ENCODE measurements at regions of chr3 and their contacts with region 1.

Region 1: DNA sequence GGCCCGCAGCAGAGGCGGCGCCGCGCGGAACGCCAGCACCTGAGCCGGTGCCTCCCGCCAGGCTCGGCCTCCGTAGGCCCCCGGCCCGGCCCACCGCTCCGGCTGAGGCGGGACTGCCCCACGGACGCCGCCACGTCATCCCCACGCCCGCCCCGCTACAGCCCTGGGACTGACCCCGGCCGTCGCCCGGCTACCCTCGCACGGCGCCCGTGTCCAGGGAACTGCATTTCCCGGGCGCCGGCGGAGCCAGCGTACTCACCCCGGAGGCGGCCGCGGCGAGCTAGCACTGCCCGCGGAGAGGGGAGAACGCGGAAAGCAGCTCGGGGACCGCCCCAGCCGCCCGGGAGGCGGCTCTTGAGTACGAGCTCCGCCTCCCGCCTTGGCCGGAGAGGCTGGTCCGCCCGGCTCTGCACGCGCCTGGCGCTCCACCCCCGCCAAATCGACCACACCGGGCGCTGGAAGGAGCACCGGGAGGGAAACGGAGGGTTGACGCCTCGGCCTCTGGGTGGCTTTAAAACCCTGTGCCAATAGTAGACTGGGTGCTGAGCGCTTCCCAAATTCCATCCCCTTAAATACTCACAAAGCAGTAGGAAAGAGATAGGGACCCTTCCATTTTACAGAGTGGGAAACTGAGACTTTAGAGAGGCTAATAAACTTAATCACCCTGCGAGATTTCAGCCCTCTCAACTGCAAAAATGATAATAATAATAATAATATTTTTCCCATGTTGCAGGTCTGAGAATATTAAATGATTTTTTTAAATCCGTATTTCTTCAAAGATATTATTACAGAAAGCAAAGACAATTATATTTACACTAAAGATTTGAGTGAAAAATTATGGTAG is at the start of gene B4GALT4:
- DNase-seq: peak; percentile 57 to 74 (median 67)
- H3K4me3 ChIP-seq: peak within 1 kb of the TSS; percentile 42 to 66
- H3K4me3 Mint-ChIP-seq: peak within 1 kb of the TSS; percentile 76 to 95 (median 88)
- H3K27ac ChIP-seq: peak within 1 kb of the TSS; percentile 77
- H3K27ac Mint-ChIP-seq: peak within 1 kb of the TSS; percentile 69 to 97 (median 94)
- H3K4me1 ChIP-seq: peaks cover 50% of the 10 kb centered on the region
- H3K4me1 Mint-ChIP-seq: peaks cover 23 to 46% (median 31%) of the 10 kb centered on the region in 4 donors
- H3K27me3 ChIP-seq: no peaks in the 10 kb centered on the region
- H3K27me3 Mint-ChIP-seq: no peaks in the 10 kb centered on the region
- total RNA-seq, gene B4GALT4: 15.9 to 18.1 TPM

Region 2: GRCh38 chr3:118890186-118890585 is 350.6 kb before region 1 on chr3:
- CTCF ChIA-PET with region 1: interaction called, 120 read pairs
- POLR2A ChIA-PET with region 1: interaction called, 6 read pairs
- intact Hi-C with region 1: no loop called
- DNase-seq: no peak
- H3K4me3 ChIP-seq: no peak overlapping the region
- H3K4me3 Mint-ChIP-seq: no peak overlapping the region
- H3K27ac ChIP-seq: no peak overlapping the region
- H3K27ac Mint-ChIP-seq: peak overlapping the region in 1 of 7 donors; percentile 15
- H3K4me1 ChIP-seq: no peaks in the 10 kb centered on the region
- H3K4me1 Mint-ChIP-seq: no peaks in the 10 kb centered on the region
- H3K27me3 ChIP-seq: no peaks in the 10 kb centered on the region
- H3K27me3 Mint-ChIP-seq: peaks cover 2% of the 10 kb centered on the region in 2 donors

Region 3: DNA sequence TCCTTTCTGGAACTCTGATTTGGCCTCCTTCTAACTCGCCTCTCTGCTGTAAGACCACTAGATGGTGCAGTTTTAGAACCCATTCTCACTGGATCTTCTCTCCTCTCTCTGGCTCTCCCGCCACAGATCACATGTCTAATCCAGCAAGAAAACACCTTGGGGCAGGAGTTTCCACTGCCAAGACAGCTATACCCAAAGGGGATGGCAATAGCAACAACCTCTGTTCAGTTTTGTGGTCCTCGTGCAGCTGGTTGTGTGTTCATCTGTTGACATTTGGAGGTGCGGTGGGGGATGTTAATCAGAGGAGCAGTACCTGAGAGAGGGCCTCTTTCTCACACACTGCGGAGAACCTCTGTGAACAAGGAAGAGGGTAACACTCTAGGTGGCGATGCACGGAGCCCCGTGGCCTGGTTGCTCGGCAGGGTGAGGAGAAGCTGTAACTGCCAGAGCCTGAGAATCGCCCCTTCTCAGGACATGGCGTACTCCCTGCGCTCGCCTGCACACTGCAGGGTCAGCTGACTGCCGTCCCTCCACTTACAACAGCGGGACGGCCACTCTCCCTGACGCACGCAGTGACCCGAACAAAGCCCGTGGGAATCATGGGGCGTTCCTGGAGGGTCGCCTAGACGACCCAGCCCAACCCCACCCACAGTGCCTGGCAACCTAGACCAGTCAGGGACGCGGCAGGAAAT is 95.2 kb before region 1 on chr3 and contains the start of gene TEX55:
- CTCF ChIA-PET with region 1: interaction called, 42 read pairs
- POLR2A ChIA-PET with region 1: interaction called, 4 read pairs
- intact Hi-C with region 1: no loop called
- DNase-seq: peak; percentile 11 to 40 (median 16)
- H3K4me3 ChIP-seq: no peak within 1 kb of the TSS
- H3K4me3 Mint-ChIP-seq: no peak within 1 kb of the TSS
- H3K27ac ChIP-seq: no peak within 1 kb of the TSS
- H3K27ac Mint-ChIP-seq: peak within 1 kb of the TSS in 2 of 7 donors; percentile 24 to 38
- H3K4me1 ChIP-seq: no peaks in the 10 kb centered on the region
- H3K4me1 Mint-ChIP-seq: peaks cover 0 to 4% (median under 1%) of the 10 kb centered on the region in 4 donors
- H3K27me3 ChIP-seq: no peaks in the 10 kb centered on the region
- H3K27me3 Mint-ChIP-seq: no peaks in the 10 kb centered on the region
- total RNA-seq, gene TEX55: not detected

Region 4: DNA sequence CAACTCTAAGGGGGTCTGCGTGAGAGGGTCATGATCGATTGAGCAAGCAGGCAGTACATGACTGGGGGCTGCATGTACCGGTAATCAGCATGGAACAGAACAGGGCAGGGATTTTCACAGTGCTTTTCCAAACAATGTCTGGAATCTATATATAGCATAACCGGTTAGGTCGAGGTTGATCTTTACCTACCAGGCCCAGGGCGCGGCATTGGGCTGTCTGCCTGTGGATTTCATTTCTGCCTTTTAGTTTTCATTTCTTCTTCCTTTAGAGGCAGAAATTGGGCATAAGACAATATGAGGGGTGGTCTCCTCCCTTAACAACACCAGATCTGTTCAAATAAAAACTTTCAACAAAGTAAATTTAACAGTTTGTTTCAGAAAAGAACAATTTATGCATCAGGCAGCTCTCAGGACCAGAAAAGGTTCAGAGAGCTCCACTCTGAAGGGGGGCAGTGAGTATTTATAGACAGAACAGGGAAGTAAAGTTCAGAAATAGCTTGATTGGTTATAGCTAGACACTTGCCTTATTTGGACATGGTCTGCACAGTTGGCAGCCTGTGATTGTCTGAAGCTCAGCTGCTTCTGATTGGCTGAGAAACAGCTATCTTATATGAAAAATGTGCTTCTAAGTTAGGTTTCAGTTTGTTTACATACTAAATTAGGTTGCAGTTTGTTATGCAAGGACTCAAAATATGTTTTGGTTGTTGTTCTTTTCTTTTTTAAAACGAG is 17.0 kb after region 1 on chr3:
- CTCF ChIA-PET with region 1: interaction called, 12 read pairs
- POLR2A ChIA-PET with region 1: no interaction called
- intact Hi-C with region 1: no loop called
- DNase-seq: no peak
- H3K4me3 ChIP-seq: no peak overlapping the region
- H3K4me3 Mint-ChIP-seq: no peak overlapping the region
- H3K27ac ChIP-seq: no peak overlapping the region
- H3K27ac Mint-ChIP-seq: no peak overlapping the region
- H3K4me1 ChIP-seq: no peaks in the 10 kb centered on the region
- H3K4me1 Mint-ChIP-seq: no peaks in the 10 kb centered on the region
- H3K27me3 ChIP-seq: no peaks in the 10 kb centered on the region
- H3K27me3 Mint-ChIP-seq: peaks cover 1 to 6% of the 10 kb centered on the region in 2 donors

Region 5: DNA sequence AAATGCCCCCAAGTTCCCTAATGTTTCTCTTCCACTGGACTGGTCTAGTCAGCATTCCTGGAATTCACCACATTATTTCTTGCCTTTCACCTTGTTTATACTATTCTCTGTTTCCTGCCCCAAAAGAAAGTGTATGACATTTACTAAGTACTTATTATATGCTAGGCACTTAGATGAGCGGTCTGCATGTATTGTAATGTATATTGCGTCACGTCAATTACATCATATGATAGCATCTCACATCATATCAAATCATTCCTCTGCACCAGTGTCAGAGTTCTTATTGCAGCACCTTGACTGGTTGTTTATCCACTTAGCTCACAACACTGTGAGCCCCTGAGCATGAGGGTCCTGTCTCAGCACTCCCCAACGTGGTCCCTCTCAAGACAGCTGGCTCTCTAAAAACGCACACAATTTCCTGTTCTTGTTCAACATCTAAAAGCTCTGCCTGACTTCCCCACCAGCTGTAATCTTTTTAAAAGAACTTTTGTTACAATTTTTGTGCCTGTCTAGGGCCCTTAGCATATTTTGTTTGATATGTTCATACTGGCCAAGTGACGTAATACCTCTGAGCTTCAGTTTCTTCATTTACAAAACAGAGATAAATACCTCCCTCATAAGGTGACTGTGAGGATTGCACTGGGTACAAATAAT is 112.2 kb after region 1 on chr3:
- CTCF ChIA-PET with region 1: interaction called, 15 read pairs
- POLR2A ChIA-PET with region 1: no interaction called
- intact Hi-C with region 1: no loop called
- DNase-seq: peak in 4 of 5 donors; percentile 32 to 49 (median 38)
- H3K4me3 ChIP-seq: no peak overlapping the region
- H3K4me3 Mint-ChIP-seq: peak overlapping the region in 3 of 8 donors; percentile 19 to 46 (median 44)
- H3K27ac ChIP-seq: no peak overlapping the region
- H3K27ac Mint-ChIP-seq: peak overlapping the region in 5 of 7 donors; percentile 8 to 70 (median 42)
- H3K4me1 ChIP-seq: peaks cover 24% of the 10 kb centered on the region
- H3K4me1 Mint-ChIP-seq: peaks cover 25 to 34% (median 27%) of the 10 kb centered on the region in 4 donors
- H3K27me3 ChIP-seq: no peaks in the 10 kb centered on the region
- H3K27me3 Mint-ChIP-seq: no peaks in the 10 kb centered on the region

Region 6: GRCh38 chr3:119676771-119677640 is 436.2 kb after region 1 on chr3 and contains the start of gene COX17:
- CTCF ChIA-PET with region 1: interaction called, 6 read pairs
- POLR2A ChIA-PET with region 1: interaction called, 3 read pairs
- intact Hi-C with region 1: loop called (anchors 10 kb)
- DNase-seq: peak; percentile 94 to 99 (median 97)
- H3K4me3 ChIP-seq: peak within 1 kb of the TSS; percentile 72 to 89
- H3K4me3 Mint-ChIP-seq: peak within 1 kb of the TSS; percentile 83 to 97 (median 91)
- H3K27ac ChIP-seq: peak within 1 kb of the TSS; percentile 69
- H3K27ac Mint-ChIP-seq: peak within 1 kb of the TSS; percentile 87 to 99 (median 96)
- H3K4me1 ChIP-seq: peaks cover 34% of the 10 kb centered on the region
- H3K4me1 Mint-ChIP-seq: peaks cover 27 to 42% (median 32%) of the 10 kb centered on the region in 4 donors
- H3K27me3 ChIP-seq: no peaks in the 10 kb centered on the region
- H3K27me3 Mint-ChIP-seq: no peaks in the 10 kb centered on the region
- total RNA-seq, gene COX17: 46.1 to 48.9 TPM

Measured in CD4-positive, alpha-beta memory T cell (primary cell).